ENCODE measurements at regions of chr2 and their contacts with region 1.

Region 1: GRCh38 chr2:236359426-236360045 is 95.3 kb upstream of the ASB18 start:
- DNase-seq: no peak
- ATAC-seq: no peak
- H3K4me3 ChIP-seq: no peak overlapping the region
- H3K27ac ChIP-seq: no peak overlapping the region
- H3K4me1 ChIP-seq: no peaks in the 10 kb centered on the region
- H3K27me3 ChIP-seq: no peaks in the 10 kb centered on the region
- CTCF ChIP-seq: no peak
- POLR2A ChIP-seq: no peak

Region 2: DNA sequence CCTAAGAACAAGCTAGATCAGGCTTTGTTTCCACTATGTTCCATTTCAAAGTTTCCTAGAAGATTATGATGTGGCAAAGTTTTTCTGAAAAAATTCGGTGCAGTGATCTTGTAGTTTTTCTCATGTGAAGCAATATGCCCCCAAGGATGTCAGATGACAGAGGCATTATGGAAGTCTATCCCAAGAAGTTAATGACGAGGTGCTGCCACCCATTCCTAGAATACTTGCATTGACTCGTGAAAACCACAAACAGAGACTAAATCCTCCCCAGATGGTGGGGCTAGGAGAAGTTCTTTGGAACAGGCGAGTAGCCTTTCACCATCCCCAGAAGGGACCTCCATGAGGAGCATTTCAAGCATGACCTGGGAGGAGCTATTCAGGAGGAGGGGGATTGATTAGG is 685.9 kb after region 1 on chr2:
- in situ Hi-C with region 1: no loop called
- intact Hi-C with region 1: loop called (anchors 5 kb)
- DNase-seq: no peak
- ATAC-seq: no peak
- H3K4me3 ChIP-seq: no peak overlapping the region
- H3K27ac ChIP-seq: no peak overlapping the region
- H3K4me1 ChIP-seq: no peaks in the 10 kb centered on the region
- H3K27me3 ChIP-seq: no peaks in the 10 kb centered on the region
- CTCF ChIP-seq: no peak
- POLR2A ChIP-seq: no peak

Measured in gastrocnemius medialis (tissue), 4 donors.